ENCODE measurements at regions of chr5 and their contacts with region 1.

Region 1: DNA sequence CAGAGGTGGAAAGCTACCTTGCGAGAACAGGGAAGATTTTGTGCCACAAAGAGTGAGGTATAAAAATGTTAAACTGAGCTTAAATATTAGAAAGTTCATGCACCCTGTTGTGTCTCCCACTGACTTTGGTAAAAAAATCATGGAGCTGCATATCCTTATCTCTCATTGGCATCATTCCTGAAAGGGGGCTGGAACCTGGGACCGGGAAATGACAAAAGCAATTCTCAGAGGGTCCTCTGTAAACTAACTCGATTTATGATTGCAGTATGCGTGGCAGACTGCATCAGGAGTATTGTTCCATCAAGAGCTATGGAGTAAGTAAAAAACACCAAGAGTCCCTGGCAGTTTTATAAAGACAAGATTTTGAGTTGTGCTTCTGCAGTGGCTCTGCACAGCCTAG is 148.8 kb downstream of the DCP2 start:
- DNase-seq: no peak
- H3K4me3 ChIP-seq: no peak overlapping the region
- H3K27ac ChIP-seq: no peak overlapping the region
- H3K4me1 ChIP-seq: no peaks in the 10 kb centered on the region
- H3K27me3 ChIP-seq: no peaks in the 10 kb centered on the region
- CTCF ChIP-seq: no peak
- POLR2A ChIP-seq: no peak

Region 2: GRCh38 chr5:113050721-113051382 is 74.5 kb before region 1 on chr5:
- intact Hi-C with region 1: loop called (anchors 5 kb)
- DNase-seq: no peak
- H3K4me3 ChIP-seq: no peak overlapping the region
- H3K27ac ChIP-seq: peak overlapping the region in 1 of 2 donors; percentile 25
- H3K4me1 ChIP-seq: no peaks in the 10 kb centered on the region
- H3K27me3 ChIP-seq: no peaks in the 10 kb centered on the region
- CTCF ChIP-seq: no peak
- POLR2A ChIP-seq: no peak

Region 3: GRCh38 chr5:113090336-113091106 is 34.9 kb before region 1 on chr5:
- intact Hi-C with region 1: no loop called
- DNase-seq: peak in 1 of 2 donors; percentile 41
- H3K4me3 ChIP-seq: no peak overlapping the region
- H3K27ac ChIP-seq: peak overlapping the region in 1 of 2 donors; percentile 21
- H3K4me1 ChIP-seq: peaks cover 0 to 12% of the 10 kb centered on the region in 2 donors
- H3K27me3 ChIP-seq: no peaks in the 10 kb centered on the region
- CTCF ChIP-seq: no peak
- POLR2A ChIP-seq: no peak

Measured in breast epithelium (tissue), 4 donors.